ENCODE measurements at regions of chr1 and their contacts with region 1.

Region 1: DNA sequence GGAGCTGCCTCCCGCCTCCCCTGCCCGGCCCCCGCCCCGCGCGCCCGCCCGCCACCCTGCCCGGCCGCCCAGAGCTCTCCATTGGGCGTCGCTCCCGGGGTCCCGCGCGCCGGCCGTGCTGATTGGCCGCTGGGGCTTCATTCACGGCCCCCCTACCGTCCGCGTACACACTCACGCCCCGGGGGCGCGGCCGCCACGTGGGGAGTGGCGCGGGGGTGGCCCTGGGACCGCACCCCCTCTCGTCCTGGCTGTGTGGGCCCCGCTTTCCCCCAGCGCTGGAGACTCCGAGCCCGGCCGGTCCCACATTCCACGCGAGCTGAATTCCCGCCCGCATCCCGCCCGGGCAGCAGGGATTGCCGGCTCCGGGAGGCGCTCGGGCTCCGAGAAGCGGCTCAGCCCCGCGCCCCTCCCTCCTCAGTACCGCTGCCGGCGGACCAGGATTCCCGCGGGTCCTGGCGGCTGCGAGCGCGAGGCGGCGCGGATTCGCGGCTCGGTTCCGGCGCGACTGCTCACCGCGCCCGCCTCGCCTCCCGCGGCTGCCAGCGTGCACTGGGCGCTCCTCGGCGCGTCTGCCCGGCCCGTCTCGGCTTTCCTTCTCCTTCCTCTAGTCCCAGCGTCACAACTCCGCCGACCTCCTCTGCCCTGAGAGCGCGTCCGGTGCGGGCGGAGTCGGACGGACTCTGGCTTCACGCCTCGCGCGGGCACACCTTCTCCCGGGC is 450 bp upstream of the POU3F1 start:
- DNase-seq: peak; percentile 59
- H3K4me3 Mint-ChIP-seq: peak overlapping the region; percentile 76
- H3K27ac Mint-ChIP-seq: no peak overlapping the region
- H3K4me1 Mint-ChIP-seq: no peaks in the 10 kb centered on the region
- H3K27me3 Mint-ChIP-seq: peaks cover 31% of the 10 kb centered on the region
- CTCF ChIP-seq: no peak

Region 2: DNA sequence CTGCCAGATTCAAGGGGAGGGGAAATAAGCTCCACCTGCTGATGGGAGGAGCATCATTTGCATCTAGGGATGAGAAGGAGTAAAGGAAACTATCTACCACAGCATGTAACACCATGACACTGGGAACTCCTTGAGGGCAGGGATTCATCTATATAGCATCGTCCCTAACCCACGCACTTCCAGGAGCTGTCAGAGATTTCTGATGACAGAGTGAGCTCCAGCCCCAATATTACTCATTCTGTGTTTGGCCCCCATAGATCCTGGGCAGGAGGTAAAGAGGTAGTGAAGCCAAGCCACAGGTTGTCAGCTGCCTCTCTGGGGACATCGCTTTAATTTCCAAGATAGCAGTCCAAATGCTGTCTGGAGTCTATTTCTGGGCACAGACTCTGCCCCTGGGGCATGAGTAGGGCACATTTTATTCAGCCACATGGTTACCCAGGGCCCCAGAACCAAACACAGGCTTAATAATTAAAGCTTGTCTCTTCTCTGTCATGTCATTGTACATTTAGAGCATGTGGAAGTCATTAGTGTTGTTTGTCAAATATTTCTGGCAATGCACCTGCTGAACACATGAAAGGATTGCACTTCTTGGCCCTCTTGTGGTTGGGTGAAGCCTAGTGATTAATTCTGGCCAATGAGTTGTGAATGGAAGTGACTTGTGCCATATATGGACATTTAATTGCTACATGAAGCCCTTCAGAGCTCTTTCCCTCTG is 105.5 kb after region 1 on chr1:
- CTCF ChIA-PET with region 1: interaction called, 5 read pairs
- POLR2A ChIA-PET with region 1: no interaction called
- intact Hi-C with region 1: loop called (anchors 5 kb)
- DNase-seq: peak; percentile 54
- H3K4me3 Mint-ChIP-seq: no peak overlapping the region
- H3K27ac Mint-ChIP-seq: no peak overlapping the region
- H3K4me1 Mint-ChIP-seq: peaks cover 4% of the 10 kb centered on the region
- H3K27me3 Mint-ChIP-seq: no peaks in the 10 kb centered on the region
- CTCF ChIP-seq: peak; percentile 20

Region 3: DNA sequence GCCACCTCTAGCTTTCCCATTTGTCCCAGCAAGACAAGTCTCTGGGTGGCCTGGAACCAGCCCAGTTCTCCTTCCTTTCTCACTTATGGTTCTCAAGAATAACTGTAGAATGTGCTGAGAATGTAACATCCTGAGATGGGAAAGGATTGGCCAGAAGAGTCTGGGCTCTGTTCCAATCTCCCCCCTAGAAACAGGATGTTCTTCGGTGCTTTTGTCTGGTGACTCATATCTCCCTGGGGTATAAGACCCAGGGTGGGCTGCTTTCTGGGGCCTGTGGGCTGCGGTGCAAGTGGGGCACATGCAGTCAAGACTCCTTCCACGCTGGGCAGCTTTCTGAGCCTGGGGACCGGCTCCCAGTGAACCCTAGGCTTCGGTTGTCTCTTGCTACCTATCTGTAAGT is 250.8 kb after region 1 on chr1:
- CTCF ChIA-PET with region 1: no interaction called
- POLR2A ChIA-PET with region 1: no interaction called
- intact Hi-C with region 1: no loop called
- DNase-seq: no peak
- H3K4me3 Mint-ChIP-seq: no peak overlapping the region
- H3K27ac Mint-ChIP-seq: no peak overlapping the region
- H3K4me1 Mint-ChIP-seq: no peaks in the 10 kb centered on the region
- H3K27me3 Mint-ChIP-seq: peaks cover 62% of the 10 kb centered on the region
- CTCF ChIP-seq: no peak

Measured in MCF 10A (cell line).